HCT116 (cell line): ENCODE measurements at regions of chr20 and their contacts with region 1.

Region 1: GRCh38 chr20:8860011-8860495 is 208.8 kb upstream of the PLCB4 start:
- DNase-seq: no peak
- ATAC-seq: no peak
- H3K4me3 ChIP-seq: no peak overlapping the region
- H3K27ac ChIP-seq: no peak overlapping the region
- H3K4me1 ChIP-seq: no peaks in the 10 kb centered on the region
- H3K27me3 ChIP-seq: no peaks in the 10 kb centered on the region
- CTCF ChIP-seq: no peak
- POLR2A ChIP-seq: no peak
- RAD21 ChIP-seq: no peak

Region 2: DNA sequence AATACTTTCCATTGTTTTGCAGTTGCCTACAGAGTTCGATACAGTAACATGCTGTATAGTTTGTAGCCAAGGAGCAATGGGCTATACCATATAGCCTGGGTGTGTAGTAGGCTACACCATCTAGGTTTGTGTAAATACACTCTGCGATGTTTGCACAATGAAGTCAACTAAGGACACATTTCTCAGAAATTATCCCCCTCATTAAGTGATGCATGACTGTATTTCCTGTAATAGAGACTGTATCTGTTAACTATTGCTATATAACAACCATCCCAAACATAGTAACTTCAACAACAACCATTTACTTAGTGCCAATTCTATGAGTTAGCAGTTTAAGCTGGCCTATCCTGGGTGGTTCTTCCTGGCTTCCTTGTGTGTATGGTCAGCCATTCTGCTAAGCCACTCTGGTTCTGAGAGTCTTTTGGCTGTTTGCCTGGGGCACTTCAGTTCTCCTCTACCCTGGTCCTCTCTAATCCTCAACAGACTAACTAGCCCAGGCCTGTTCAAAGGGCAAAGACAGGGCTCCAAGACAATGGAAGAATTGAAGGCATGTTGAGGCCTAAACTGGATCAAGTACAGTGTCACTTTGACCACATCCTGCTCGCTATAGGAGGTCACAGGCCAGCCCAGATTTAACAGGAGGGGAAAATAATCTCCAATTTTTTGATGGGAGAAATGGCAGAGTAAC is 604.0 kb before region 1 on chr20:
- CTCF ChIA-PET with region 1: no interaction called
- POLR2A ChIA-PET with region 1: no interaction called
- RAD21 ChIA-PET with region 1: no interaction called
- intact Hi-C with region 1: no loop called
- DNase-seq: no peak
- ATAC-seq: no peak
- H3K4me3 ChIP-seq: no peak overlapping the region
- H3K27ac ChIP-seq: no peak overlapping the region
- H3K4me1 ChIP-seq: no peaks in the 10 kb centered on the region
- H3K27me3 ChIP-seq: no peaks in the 10 kb centered on the region
- CTCF ChIP-seq: no peak
- POLR2A ChIP-seq: no peak
- RAD21 ChIP-seq: no peak

Region 3: GRCh38 chr20:8924539-8924938 is 64.5 kb after region 1 on chr20:
- CTCF ChIA-PET with region 1: no interaction called
- POLR2A ChIA-PET with region 1: no interaction called
- RAD21 ChIA-PET with region 1: no interaction called
- intact Hi-C with region 1: loop called (anchors 10 kb)
- DNase-seq: no peak
- ATAC-seq: no peak
- H3K4me3 ChIP-seq: no peak overlapping the region
- H3K27ac ChIP-seq: no peak overlapping the region
- H3K4me1 ChIP-seq: no peaks in the 10 kb centered on the region
- H3K27me3 ChIP-seq: no peaks in the 10 kb centered on the region
- CTCF ChIP-seq: no peak
- POLR2A ChIP-seq: no peak
- RAD21 ChIP-seq: no peak

Region 4: DNA sequence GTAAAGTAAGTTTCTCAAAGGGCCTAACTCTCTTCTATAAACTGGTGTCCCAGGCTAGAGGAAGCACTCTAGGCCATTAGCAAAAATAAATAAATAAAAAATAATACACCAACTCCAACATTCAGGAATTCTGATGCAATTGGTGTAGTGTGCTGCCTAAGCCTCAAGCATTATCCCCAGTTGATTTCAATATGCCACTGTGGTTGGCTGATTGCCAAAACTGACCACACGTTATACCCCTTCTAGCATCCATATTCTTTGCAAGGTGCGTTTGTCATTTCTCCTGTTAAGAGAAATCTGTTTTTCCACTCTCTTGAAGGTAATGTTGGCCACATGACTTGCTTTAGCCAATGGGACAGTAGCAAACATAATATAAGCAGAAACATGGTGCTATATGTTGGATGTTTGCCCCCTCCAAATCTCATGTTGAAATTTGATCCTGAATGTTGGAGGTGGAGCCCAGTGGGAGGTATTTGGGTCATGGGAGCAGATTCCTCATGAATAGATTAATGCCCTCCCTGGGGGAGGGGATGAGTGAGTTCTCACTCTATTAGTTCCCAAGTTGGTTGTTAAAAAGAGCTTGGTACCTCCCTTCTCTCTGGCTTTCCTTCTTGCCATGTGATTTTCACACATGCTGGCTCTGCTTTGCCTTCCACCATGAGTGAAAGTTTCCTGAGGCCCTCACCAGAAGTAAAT is 136.9 kb after region 1 on chr20:
- CTCF ChIA-PET with region 1: no interaction called
- POLR2A ChIA-PET with region 1: no interaction called
- RAD21 ChIA-PET with region 1: no interaction called
- intact Hi-C with region 1: no loop called
- DNase-seq: no peak
- ATAC-seq: no peak
- H3K4me3 ChIP-seq: no peak overlapping the region
- H3K27ac ChIP-seq: no peak overlapping the region
- H3K4me1 ChIP-seq: no peaks in the 10 kb centered on the region
- H3K27me3 ChIP-seq: no peaks in the 10 kb centered on the region
- CTCF ChIP-seq: no peak
- POLR2A ChIP-seq: no peak
- RAD21 ChIP-seq: no peak

Region 5: DNA sequence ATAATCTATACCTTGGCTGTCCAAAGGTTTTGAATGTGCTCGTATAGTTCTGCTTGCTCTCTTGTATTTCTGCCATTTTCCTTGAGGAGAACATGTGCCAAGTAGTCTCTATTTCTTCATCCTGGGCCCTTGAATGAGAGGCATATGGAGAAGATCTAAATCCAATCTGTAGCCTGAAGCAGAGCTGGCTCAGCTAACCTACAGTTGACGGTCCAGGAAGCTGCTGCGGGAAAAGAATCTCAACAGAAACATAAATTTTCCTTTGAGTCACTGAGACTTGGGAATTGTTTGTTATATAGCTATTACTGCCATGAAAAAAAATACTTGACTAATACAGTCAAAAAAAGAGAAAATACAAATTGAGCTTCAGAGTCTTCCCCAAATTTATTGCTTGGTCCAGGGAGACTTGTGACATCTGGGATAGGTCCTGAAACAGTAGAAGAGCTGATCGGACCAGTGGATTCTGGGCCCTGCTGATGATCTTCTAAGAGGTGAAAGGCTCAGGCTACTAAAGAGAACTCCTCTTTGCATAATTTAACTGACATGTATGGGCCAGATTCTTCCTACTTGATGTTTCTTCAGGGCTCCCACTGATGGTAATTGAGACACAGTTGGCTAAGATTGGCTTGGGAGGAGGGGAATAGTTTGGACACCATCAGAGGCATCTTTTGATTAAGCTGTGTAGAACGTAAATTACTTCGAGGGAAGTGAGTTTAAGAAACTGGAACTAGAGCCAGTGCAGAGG is 178.9 kb after region 1 on chr20:
- CTCF ChIA-PET with region 1: no interaction called
- POLR2A ChIA-PET with region 1: no interaction called
- RAD21 ChIA-PET with region 1: no interaction called
- intact Hi-C with region 1: no loop called
- DNase-seq: no peak
- ATAC-seq: no peak
- H3K4me3 ChIP-seq: no peak overlapping the region
- H3K27ac ChIP-seq: no peak overlapping the region
- H3K4me1 ChIP-seq: peaks cover 10 to 13% of the 10 kb centered on the region in 2 experiments
- H3K27me3 ChIP-seq: no peaks in the 10 kb centered on the region
- CTCF ChIP-seq: no peak
- POLR2A ChIP-seq: no peak
- RAD21 ChIP-seq: no peak